ENCODE measurements at regions of chr20 and their contacts with region 1.

Region 1: DNA sequence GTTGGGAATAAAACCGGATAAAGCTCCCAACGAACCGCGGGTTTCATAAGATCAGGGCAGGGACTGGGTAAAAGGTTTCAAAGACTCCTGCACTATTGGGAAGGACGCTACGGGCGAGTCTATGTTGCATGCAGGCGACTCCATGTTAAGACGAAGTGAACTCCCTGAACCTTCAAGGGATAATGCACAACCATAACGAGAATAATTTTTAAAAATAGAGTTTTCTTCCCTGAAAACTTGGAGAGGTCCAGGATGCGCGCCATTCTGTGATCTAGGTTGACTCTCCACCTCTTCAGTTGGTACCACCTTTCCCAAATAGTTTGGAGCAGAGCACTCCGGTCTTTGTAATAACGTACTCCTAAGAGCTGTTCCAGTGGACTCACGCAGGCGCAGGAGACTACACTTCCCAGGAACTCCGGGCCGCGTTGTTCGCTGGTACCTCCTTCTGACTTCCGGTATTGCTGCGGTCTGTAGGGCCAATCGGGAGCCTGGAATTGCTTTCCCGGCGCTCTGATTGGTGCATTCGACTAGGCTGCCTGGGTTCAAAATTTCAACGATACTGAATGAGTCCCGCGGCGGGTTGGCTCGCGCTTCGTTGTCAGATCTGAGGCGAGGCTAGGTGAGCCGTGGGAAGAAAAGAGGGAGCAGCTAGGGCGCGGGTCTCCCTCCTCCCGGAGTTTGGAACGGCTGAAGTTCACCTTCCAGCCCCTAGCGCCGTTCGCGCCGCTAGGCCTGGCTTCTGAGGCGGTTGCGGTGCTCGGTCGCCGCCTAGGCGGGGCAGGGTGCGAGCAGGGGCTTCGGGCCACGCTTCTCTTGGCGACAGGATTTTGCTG is at the start of gene TPX2:
- DNase-seq: peak; percentile 95 to 96
- ATAC-seq: peak; percentile 100
- H3K4me3 ChIP-seq: peak within 1 kb of the TSS; percentile 65 to 95 (median 70)
- H3K27ac ChIP-seq: peak within 1 kb of the TSS; percentile 79 to 88 (median 86)
- H3K4me1 ChIP-seq: peaks cover 9 to 12% of the 10 kb centered on the region in 2 donors
- H3K27me3 ChIP-seq: no peaks in the 10 kb centered on the region
- CTCF ChIP-seq: peak in 3 of 5 experiments; percentile 18 to 27 (median 24)
- POLR2A ChIP-seq: peak; percentile 69 to 70
- total RNA-seq, gene TPX2: 0.46 to 1.9 (median 1.0) TPM

Region 2: DNA sequence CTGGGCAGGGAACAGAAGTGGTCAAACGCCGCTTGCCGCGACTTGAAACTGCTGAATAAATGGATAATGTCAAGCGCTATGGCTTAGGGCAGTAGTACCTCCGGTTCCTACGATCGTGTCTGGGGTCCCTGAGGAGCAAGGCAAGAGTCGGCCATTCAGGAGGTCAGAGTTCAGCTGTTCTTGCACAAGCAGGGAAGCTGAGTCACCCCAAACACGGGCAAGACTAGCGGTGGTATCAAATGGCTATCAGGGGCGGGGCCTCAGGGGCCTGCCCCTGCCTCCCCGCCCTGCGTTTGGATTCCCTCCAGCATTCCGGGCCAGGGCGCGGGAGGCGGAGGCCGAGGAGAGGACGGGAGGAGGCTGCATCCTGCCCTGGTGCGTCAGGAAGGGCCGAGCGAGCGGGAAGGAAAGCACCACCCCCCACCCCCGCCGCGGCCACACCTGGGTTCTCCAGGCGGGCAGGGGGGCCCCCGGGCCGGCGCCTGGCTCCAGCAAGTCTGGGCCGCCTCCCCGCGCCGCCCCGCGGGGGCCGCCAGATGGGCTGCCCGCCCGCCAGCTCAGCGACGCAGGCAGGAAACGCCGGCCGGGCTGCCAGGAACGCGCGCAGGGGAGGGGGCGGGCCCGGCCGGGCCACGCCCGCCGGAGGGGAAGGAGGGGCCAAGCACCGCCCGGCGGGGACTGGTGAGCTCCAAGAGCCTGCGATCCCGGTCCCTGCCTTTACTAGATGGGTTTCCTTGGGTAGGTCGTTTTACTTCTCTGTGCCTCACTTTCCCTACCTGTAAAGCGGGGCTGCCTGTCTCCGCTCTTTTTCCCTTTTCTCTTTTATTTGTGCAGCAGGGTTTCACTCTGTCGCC is 166.0 kb before region 1 on chr20:
- in situ Hi-C with region 1: loop called in 1 of 4 experiments (anchors 25 kb)
- intact Hi-C with region 1: no loop called
- DNase-seq: peak; percentile 96 to 98
- ATAC-seq: peak; percentile 92
- H3K4me3 ChIP-seq: peak overlapping the region; percentile 54 to 68 (median 56)
- H3K27ac ChIP-seq: peak overlapping the region; percentile 86 to 93 (median 89)
- H3K4me1 ChIP-seq: peaks cover 13 to 19% of the 10 kb centered on the region in 2 donors
- H3K27me3 ChIP-seq: no peaks in the 10 kb centered on the region
- CTCF ChIP-seq: peak in 3 of 5 experiments; percentile 7 to 25 (median 23)
- POLR2A ChIP-seq: peak; percentile 86 to 89

Region 3: GRCh38 chr20:31811796-31812728 is 73.1 kb after region 1 on chr20:
- in situ Hi-C with region 1: loop called in 1 of 4 experiments (anchors 10 kb)
- intact Hi-C with region 1: no loop called
- DNase-seq: peak; percentile 57 to 90
- ATAC-seq: peak; percentile 72 to 80
- H3K4me3 ChIP-seq: peak overlapping the region; percentile 5 to 38 (median 22)
- H3K27ac ChIP-seq: peak overlapping the region; percentile 87 to 95 (median 93)
- H3K4me1 ChIP-seq: peaks cover 73 to 81% of the 10 kb centered on the region in 2 donors
- H3K27me3 ChIP-seq: no peaks in the 10 kb centered on the region
- CTCF ChIP-seq: no peak
- POLR2A ChIP-seq: peak; percentile 7 to 41

Region 4: GRCh38 chr20:31835977-31836852 is 97.3 kb after region 1 on chr20:
- in situ Hi-C with region 1: loop called in 1 of 4 experiments (anchors 25 kb)
- intact Hi-C with region 1: loop called (anchors 5 kb)
- DNase-seq: peak; percentile 89 to 94
- ATAC-seq: peak; percentile 81 to 96
- H3K4me3 ChIP-seq: no peak overlapping the region
- H3K27ac ChIP-seq: peak overlapping the region; percentile 79 to 95 (median 80)
- H3K4me1 ChIP-seq: peaks cover 14 to 33% of the 10 kb centered on the region in 2 donors
- H3K27me3 ChIP-seq: no peaks in the 10 kb centered on the region
- CTCF ChIP-seq: no peak
- POLR2A ChIP-seq: no peak

Region 5: DNA sequence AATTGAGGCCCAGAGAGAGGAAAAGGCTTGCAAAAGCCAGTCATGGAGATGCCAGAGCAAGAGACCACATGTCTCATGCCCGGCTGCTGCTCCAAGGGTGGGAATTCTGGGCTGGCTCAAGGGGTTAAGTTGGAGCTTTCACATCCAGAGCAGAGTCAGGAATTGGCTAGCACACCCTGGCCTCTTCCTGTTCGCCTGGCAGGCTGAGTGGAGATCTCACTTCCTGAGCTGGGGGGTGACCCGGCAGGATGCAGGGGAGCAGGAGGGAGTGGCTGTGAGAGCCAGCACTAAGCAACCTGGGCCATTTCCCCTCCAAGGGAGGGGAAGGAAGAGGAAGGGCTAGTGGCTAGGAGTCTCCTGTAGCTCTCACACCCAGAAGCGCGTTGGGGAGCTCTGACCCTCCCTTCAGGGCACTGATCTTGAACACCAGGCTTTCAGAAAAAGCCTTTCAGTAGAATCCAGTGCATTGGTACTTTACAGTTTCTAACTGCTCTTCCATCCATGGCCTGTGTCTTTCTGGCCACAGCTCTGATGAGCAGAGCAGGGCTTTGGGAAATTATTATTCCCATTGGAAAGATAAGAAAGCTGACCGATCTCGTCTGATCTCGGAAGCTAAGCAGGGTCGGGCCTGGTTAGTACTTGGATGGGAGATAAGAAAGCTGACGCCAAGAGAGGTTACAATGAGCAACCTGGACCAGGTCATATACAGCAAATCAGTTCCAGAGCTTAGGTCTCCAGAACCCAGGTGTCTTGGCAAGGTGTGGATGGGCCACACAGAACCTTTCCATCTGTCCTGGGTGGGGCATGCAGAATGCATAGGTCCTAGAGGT is 269.1 kb after region 1 on chr20:
- in situ Hi-C with region 1: no loop called
- intact Hi-C with region 1: no loop called
- DNase-seq: no peak
- ATAC-seq: peak; percentile 60 to 65
- H3K4me3 ChIP-seq: no peak overlapping the region
- H3K27ac ChIP-seq: peak overlapping the region in 3 of 4 donors; percentile 12 to 65 (median 44)
- H3K4me1 ChIP-seq: peaks cover 0 to 2% of the 10 kb centered on the region in 2 donors
- H3K27me3 ChIP-seq: peaks cover 0 to 6% (median 0%) of the 10 kb centered on the region in 3 donors
- CTCF ChIP-seq: no peak
- POLR2A ChIP-seq: no peak

Region 6: GRCh38 chr20:32382102-32382950 is 643.4 kb after region 1 on chr20:
- in situ Hi-C with region 1: no loop called
- intact Hi-C with region 1: no loop called
- DNase-seq: no peak
- ATAC-seq: no peak
- H3K4me3 ChIP-seq: no peak overlapping the region
- H3K27ac ChIP-seq: no peak overlapping the region
- H3K4me1 ChIP-seq: peaks cover 21 to 27% of the 10 kb centered on the region in 2 donors
- H3K27me3 ChIP-seq: no peaks in the 10 kb centered on the region
- CTCF ChIP-seq: no peak
- POLR2A ChIP-seq: no peak

Region 7: DNA sequence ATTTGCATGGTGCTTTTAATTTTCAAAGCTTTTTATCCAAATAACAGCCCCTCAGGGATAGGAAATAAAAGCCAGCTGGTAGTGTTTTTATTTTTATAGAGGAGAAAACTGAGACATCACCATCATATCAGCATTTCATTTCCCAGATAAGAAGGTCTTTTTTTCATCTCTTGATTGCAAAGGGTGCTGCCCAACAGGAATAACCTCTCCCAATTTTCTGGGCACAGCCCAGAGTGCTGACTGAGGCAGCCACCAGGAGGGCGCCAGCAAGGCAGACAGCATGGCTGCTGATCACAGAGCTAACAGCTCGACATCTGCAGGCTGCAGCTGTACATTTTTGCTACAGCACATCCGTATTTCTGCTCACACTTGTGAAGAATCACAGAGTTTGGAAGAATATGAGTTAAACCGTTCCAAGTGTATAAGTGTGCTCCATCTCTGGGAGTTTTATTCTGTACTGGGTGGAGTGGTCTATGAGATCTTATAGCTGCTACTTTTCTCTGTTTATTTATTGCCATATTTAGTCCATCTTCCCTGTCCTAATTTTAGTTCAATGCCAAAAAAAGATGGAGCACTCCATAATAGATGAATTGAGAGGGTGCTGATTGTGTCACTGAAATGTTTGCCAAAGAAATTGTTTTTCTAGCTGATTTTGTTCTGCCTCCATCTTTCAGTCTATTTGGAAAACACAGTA is 1837.6 kb after region 1 on chr20:
- in situ Hi-C with region 1: no loop called
- intact Hi-C with region 1: no loop called
- DNase-seq: no peak
- ATAC-seq: no peak
- H3K4me3 ChIP-seq: no peak overlapping the region
- H3K27ac ChIP-seq: no peak overlapping the region
- H3K4me1 ChIP-seq: peaks cover 9 to 11% of the 10 kb centered on the region in 2 donors
- H3K27me3 ChIP-seq: no peaks in the 10 kb centered on the region
- CTCF ChIP-seq: no peak
- POLR2A ChIP-seq: no peak